ENCODE measurements at regions of chr7 and their contacts with region 1.

Region 1: DNA sequence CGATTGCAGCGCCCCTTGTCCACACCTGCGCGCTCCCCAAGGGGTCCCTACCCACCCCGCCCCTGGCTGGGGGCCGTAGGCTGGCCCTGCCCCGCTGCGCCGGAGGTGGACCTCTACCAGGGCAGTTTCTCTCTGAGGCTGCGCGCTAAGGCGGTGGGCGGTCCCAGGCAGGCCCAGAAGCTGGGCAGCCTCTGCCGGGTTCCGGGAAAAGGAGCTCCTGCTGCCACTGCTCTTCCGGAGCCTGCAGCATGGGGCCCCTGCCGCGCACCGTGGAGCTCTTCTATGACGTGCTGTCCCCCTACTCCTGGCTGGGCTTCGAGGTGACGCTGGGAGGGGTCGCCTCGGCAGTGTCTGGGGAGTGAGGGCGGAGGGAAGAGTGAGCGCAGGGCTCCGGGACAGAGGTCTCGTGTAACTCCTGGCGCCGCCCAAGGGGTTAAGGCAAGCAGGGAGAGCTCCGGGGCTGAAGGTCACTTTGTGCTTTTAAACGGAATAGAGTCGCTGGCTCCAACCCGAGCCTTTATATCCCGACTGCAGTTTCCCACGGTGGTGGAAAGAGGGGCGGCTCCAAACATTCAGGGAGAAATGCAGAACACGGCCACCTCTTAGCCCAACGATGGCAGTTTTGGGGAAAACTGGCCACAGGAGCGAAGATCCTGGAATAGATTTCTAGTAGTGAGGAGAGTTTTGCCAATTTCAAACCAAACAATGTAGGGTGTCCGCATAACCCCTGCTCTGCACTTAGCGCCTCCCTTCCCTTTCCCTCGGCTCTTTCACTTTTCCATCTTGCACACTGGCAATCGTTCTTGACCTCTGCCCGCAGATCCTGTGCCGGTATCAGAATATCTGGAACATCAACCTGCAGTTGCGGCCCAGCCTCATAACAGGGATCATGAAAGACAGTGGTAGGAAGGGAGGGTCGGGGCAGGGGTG is at the start of gene GSTK1:
- DNase-seq: peak; percentile 94
- H3K4me3 ChIP-seq: peak within 1 kb of the TSS; percentile 76 to 96
- H3K27ac ChIP-seq: peak within 1 kb of the TSS; percentile 54 to 79; a peak in 3 of 4 replicates
- H3K4me1 ChIP-seq: peaks cover 7 to 12% of the 10 kb centered on the region in 2 experiments; a peak in 2 of 4 replicates
- H3K27me3 ChIP-seq: no peaks in the 10 kb centered on the region
- CTCF ChIP-seq: 0 out of 2 replicates have a peak, but pooled peaks have one; percentile 8
- EP300 ChIP-seq: no peak
- RAD21 ChIP-seq: no peak
- polyA plus RNA-seq, gene GSTK1: 299 and 354 TPM in 2 replicates

Region 2: DNA sequence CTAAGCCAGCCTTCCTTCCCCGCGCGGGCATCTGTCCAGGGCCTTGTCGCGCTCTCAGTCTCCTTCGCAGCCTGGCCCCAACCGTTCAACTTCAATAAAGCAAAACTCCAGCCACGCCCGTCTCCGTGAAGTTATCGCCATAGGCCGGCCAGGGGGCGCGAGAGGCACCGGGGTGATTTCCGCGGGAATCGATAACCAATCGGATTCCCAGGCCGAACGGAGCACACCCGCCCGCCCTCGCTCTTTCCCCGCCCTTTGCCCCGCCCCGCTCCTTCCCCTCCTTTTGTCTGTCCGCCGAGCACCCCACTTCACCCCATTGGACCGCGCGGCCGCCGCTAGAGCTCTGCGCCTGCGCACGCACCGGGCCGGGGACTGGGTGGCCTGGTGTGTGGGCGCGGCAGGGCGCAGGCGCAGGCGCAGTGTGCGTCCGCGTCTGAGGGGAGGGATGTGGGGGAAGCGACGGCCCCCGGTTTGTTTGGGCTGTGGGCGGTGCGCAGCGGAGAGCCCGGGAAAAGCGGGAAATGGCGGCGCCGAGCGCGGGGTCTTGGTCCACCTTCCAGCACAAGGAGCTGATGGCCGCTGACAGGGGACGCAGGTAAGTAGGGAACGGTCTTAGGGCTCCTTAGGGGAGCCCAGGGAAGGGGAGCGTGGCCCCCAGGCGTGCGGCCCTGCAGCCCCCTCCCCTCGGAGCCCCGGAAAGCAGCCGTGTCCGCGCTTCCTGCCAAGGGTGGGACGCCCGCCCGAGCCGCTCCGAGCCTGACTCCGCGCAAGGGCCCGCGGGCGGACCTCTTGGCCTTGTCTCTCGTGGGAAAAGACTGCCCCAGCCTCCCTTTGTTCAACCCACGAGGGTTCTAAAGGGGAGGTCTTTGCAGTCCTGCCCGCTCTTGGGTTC is 24.6 kb after region 1 on chr7 and contains the start of gene CASP2:
- CTCF ChIA-PET with region 1: interaction called, 6 read pairs
- POLR2A ChIA-PET with region 1: interaction called, 13 read pairs
- DNase-seq: peak; percentile 100
- H3K4me3 ChIP-seq: peak within 1 kb of the TSS; percentile 73 to 86
- H3K27ac ChIP-seq: peak within 1 kb of the TSS; percentile 69 to 89
- H3K4me1 ChIP-seq: peaks cover 15 to 26% of the 10 kb centered on the region in 2 experiments; a peak in 3 of 4 replicates
- H3K27me3 ChIP-seq: no peaks in the 10 kb centered on the region
- CTCF ChIP-seq: peak; percentile 47
- EP300 ChIP-seq: no peak
- RAD21 ChIP-seq: no peak
- polyA plus RNA-seq, gene CASP2: 19.7 and 22.3 TPM in 2 replicates

Region 3: GRCh38 chr7:143299840-143300239 is 36.3 kb after region 1 on chr7:
- CTCF ChIA-PET with region 1: interaction called, 15 read pairs
- POLR2A ChIA-PET with region 1: no interaction called
- DNase-seq: peak; percentile 72
- H3K4me3 ChIP-seq: no peak overlapping the region
- H3K27ac ChIP-seq: peak overlapping the region in 1 of 2 experiments; percentile 1; a peak in 1 of 4 replicates
- H3K4me1 ChIP-seq: peaks cover 0 to 26% of the 10 kb centered on the region in 2 experiments; a peak in 3 of 4 replicates
- H3K27me3 ChIP-seq: no peaks in the 10 kb centered on the region
- CTCF ChIP-seq: peak; percentile 69
- EP300 ChIP-seq: no peak
- RAD21 ChIP-seq: peak; percentile 51

Region 4: GRCh38 chr7:143416565-143417149 is 153.1 kb after region 1 on chr7:
- CTCF ChIA-PET with region 1: interaction called, 10 read pairs
- POLR2A ChIA-PET with region 1: no interaction called
- DNase-seq: peak; percentile 82
- H3K4me3 ChIP-seq: no peak overlapping the region
- H3K27ac ChIP-seq: peak overlapping the region in 1 of 2 experiments; percentile 76; a peak in 2 of 4 replicates
- H3K4me1 ChIP-seq: peaks cover 0 to 12% of the 10 kb centered on the region in 2 experiments; a peak in 2 of 4 replicates
- H3K27me3 ChIP-seq: no peaks in the 10 kb centered on the region
- CTCF ChIP-seq: peak; percentile 98
- EP300 ChIP-seq: no peak
- RAD21 ChIP-seq: peak; percentile 90

Measured in SK-N-SH (cell line).